ENCODE measurements at regions of chr19 and their contacts with region 1.

Region 1: DNA sequence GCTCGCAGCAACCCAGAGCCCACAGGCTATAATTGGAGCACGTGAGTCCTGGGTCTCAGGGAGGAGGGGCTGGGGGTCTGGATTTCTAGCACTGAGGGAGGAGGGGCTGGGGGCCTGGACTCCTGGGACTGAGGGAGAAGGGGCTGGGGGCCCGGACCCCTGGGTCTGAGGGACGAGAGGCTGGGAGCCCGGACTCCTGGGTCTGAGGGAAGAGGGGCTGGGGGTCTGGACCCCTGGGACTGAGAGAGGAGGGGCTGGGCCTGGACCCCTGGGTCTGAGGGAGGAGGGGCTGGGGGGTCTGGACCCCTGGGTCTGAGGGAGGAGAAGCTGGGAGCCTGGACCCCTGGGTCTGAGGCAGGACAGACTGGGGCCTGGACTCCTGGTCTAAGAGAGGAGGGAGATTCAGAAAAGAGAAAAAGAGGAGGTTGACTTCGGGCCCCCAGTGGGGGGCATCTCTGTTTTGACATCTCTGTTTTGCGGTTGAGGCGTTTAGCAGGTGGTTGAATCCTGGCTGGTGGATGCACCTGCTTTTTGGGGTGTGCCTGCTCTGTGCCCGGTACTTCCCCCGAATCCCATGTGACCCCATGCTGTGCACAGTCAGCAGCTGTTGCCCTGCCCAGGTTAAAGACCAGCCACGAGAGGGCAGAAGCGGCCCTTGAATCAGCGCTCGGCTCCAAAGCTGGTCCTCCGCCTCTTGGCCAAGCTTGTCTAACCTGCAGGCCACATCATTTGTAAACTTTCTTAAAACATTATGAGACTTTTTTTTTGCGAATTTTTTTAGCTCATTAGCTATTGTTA is 10.5 kb downstream of the PVR start:
- DNase-seq: peak; percentile 82
- ATAC-seq: peak; percentile 90
- H3K4me3 Mint-ChIP-seq: no peak overlapping the region
- H3K27ac Mint-ChIP-seq: no peak overlapping the region
- H3K4me1 Mint-ChIP-seq: peaks cover 6% of the 10 kb centered on the region
- H3K27me3 Mint-ChIP-seq: no peaks in the 10 kb centered on the region

Region 2: GRCh38 chr19:44570984-44571684 is 83.0 kb before region 1 on chr19:
- CTCF ChIA-PET with region 1: interaction called, 40 read pairs
- POLR2A ChIA-PET with region 1: no interaction called
- DNase-seq: peak; percentile 75
- ATAC-seq: peak; percentile 76
- H3K4me3 Mint-ChIP-seq: no peak overlapping the region
- H3K27ac Mint-ChIP-seq: no peak overlapping the region
- H3K4me1 Mint-ChIP-seq: no peaks in the 10 kb centered on the region
- H3K27me3 Mint-ChIP-seq: peaks cover 9% of the 10 kb centered on the region

Region 3: DNA sequence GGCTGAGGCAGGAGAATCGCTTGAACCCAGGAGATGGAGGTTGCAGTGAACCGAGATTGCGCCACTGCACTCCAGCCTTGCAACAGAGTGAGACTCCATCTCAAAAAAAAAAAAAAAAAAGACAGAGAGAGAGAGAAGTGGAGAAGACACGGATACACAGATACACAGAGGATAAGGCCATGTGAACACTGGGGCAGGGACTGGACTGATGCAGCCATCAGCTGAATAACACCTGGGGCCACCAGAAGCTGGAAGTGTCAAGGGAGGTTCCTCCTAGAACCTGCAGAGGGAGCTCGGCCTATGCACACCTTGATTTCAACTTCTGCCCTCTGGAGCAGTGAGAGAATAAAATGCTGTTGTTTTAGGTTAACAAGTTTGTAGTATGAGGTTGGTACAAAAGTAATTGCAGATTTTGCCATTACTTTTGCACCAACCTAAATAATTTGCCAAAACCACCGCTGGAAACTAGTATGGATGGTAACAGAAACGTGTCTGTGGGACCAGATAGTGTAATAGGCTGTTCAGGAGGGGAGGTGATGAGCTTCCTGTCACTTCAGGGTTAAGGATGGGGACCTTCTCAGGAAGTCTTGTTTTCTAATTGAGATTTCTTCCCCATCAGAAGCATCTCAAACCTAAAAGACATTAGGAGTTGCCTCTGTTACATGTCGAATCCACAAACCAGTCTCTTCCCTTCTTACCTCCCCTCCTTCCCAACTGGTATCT is 77.2 kb before region 1 on chr19:
- CTCF ChIA-PET with region 1: interaction called, 24 read pairs
- POLR2A ChIA-PET with region 1: no interaction called
- DNase-seq: peak; percentile 41
- ATAC-seq: peak; percentile 70
- H3K4me3 Mint-ChIP-seq: no peak overlapping the region
- H3K27ac Mint-ChIP-seq: no peak overlapping the region
- H3K4me1 Mint-ChIP-seq: no peaks in the 10 kb centered on the region
- H3K27me3 Mint-ChIP-seq: no peaks in the 10 kb centered on the region

Region 4: DNA sequence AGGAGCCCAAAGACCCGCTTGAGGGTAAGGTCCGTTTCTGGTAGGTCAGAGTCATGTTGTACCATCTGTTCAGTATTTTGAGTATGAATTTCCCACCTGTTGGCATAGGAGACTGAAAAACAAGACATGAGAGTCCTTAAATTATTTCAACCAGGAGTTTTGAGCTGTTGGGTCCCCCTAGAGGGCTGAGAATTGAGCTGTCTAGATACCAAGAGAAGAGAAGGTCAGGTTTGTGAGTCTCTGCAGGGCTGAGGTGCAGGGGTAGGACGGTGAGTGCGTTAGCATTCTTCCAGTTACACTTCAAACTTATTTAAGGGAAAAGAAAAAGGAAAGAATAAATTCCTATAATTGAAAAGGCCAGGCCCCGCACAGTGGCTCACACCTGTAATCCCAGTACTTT is 128.6 kb after region 1 on chr19:
- CTCF ChIA-PET with region 1: interaction called, 10 read pairs
- POLR2A ChIA-PET with region 1: no interaction called
- DNase-seq: no peak
- ATAC-seq: no peak
- H3K4me3 Mint-ChIP-seq: no peak overlapping the region
- H3K27ac Mint-ChIP-seq: no peak overlapping the region
- H3K4me1 Mint-ChIP-seq: peaks cover 7% of the 10 kb centered on the region
- H3K27me3 Mint-ChIP-seq: no peaks in the 10 kb centered on the region